Activated CD8-positive, alpha-beta T cell treated with anti-CD3 and anti-CD28 coated beads, Interleukin-2, amount 10 ng/mL, durations not matched to agents 7 days and 5 days (primary cell): ENCODE measurements at regions of chr4 and their contacts with region 1.

Region 1: GRCh38 chr4:6688879-6689505 is 4.7 kb upstream of the S100P start:
- DNase-seq: peak; percentile 92
- ATAC-seq: peak; percentile 83
- H3K4me3 Mint-ChIP-seq: peak overlapping the region; percentile 81
- H3K27ac Mint-ChIP-seq: peak overlapping the region; percentile 91
- H3K4me1 Mint-ChIP-seq: peaks cover 85% of the 10 kb centered on the region
- H3K27me3 Mint-ChIP-seq: no peaks in the 10 kb centered on the region

Region 2: GRCh38 chr4:6701371-6701770 is 12.4 kb after region 1 on chr4:
- CTCF ChIA-PET with region 1: interaction called, 38 read pairs
- POLR2A ChIA-PET with region 1: interaction called, 37 read pairs
- DNase-seq: peak; percentile 54
- ATAC-seq: no peak
- H3K4me3 Mint-ChIP-seq: no peak overlapping the region
- H3K27ac Mint-ChIP-seq: no peak overlapping the region
- H3K4me1 Mint-ChIP-seq: peaks cover 73% of the 10 kb centered on the region
- H3K27me3 Mint-ChIP-seq: no peaks in the 10 kb centered on the region

Region 3: GRCh38 chr4:6709230-6710114 is 20.5 kb after region 1 on chr4 and contains the start of gene MRFAP1L1:
- CTCF ChIA-PET with region 1: interaction called, 38 read pairs
- POLR2A ChIA-PET with region 1: interaction called, 37 read pairs
- DNase-seq: peak; percentile 98
- ATAC-seq: peak; percentile 84
- H3K4me3 Mint-ChIP-seq: peak within 1 kb of the TSS; percentile 99
- H3K27ac Mint-ChIP-seq: peak within 1 kb of the TSS; percentile 95
- H3K4me1 Mint-ChIP-seq: peaks cover 51% of the 10 kb centered on the region
- H3K27me3 Mint-ChIP-seq: no peaks in the 10 kb centered on the region
- total RNA-seq, gene MRFAP1L1: 65.5 to 67.4 TPM

Region 4: DNA sequence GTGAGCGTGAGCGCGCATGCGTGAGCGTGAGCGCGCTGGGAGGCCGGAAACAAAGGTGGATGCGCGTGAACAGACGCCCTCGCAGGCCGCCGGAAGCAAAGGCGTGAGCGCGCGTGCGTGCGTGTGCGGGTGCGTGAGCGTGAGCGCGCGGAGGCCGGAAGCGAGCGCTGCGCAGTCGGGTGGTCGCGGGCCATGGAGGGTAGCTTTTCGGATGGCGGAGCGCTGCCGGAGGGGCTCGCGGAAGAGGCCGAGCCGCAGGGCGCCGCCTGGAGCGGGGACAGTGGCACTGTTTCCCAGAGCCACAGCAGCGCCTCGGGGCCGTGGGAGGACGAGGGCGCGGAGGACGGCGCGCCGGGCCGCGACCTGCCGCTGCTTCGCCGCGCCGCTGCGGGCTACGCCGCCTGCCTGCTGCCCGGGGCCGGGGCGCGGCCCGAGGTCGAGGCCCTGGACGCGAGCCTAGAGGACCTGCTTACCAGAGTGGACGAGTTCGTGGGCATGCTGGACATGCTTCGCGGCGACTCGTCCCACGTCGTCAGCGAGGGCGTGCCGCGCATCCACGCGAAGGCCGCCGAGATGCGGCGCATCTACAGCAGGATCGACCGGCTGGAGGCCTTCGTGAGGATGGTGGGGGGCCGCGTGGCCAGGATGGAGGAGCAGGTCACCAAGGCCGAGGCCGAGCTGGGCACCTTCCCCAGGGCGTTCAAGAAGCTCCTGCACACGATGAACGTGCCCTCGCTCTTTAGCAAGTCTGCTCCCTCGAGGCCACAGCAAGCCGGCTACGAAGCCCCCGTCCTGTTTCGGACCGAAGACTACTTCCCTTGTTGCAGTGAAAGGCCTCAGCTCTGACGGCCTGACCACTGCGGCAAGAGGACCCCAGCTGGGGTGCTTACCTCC is 27.3 kb after region 1 on chr4 and contains the start of gene BLOC1S4:
- CTCF ChIA-PET with region 1: interaction called, 17 read pairs
- POLR2A ChIA-PET with region 1: interaction called, 25 read pairs
- DNase-seq: peak; percentile 92
- ATAC-seq: peak; percentile 83
- H3K4me3 Mint-ChIP-seq: peak within 1 kb of the TSS; percentile 91
- H3K27ac Mint-ChIP-seq: peak within 1 kb of the TSS; percentile 97
- H3K4me1 Mint-ChIP-seq: peaks cover 35% of the 10 kb centered on the region
- H3K27me3 Mint-ChIP-seq: no peaks in the 10 kb centered on the region
- total RNA-seq, gene BLOC1S4: 19.6 to 21.5 TPM